Right ventricle myocardium inferior (tissue), 1 donor: ENCODE measurements at regions of chr6 and their contacts with region 1.

Region 1: GRCh38 chr6:11999246-11999645 is 12.9 kb upstream of the HIVEP1 start:
- DNase-seq: no peak
- ATAC-seq: peak; percentile 65

Region 2: DNA sequence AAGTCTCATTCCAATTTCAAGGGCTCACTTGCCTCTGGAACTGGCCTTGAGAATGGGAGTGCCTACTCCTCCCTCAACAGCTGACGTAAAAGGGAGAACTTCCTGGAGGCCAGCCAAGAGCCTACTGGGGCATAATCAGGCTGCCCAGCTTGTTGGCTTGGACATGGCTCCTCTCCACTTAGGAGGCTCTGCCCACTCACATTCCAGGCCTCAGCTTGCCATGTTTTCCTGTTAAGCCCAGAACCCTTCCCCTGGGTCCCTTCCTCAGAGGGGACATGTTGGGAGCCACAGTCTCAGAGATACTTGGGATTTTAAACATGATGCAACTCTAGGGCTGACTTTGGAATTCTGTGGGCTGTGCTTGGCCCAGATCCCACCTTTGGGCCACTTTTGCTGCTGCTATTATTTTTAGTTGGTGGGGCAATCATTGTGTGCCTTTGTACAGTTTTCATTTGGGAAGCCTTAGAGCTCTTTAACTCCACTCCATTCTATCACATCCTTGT is 189.2 kb before region 1 on chr6:
- intact Hi-C with region 1: loop called (anchors 5 kb)
- DNase-seq: peak; percentile 73
- ATAC-seq: peak; percentile 92